ENCODE measurements at regions of chr1 and their contacts with region 1.

Region 1: DNA sequence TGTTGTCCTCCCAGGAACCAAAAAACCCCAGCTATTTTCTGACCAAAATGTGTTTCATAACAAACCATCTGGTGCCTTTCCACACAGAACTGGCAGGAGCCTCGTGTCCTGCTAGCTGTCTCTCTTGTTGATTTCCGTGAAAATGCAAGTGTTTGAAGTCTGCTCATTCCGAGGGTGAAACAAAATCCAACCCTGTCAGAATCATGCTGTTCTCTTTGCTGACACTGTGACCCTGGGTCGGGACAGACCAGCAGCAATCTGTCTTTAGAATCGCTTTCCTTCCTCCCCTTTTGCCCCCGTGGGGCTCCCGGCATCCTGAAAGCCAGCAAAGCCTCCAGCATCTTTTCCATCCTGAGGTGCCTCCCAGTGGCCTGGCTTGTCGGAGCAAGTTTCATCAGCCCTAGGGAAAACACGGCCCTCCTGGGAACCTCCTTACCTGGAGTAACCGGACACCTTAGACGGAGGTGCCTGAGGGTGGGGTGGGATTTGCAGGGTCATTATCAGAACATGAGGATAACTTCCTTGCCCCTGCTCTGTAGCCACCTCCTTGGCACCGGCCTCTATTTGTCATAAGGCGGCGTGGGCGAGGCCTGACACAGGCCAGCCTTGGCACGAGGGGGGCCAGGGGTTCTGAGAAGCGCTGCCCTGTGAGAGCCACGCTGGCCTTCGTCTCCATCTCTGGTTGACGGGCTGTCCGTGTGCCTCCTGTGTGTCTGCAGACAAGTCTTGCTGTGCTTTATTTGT is 24.9 kb downstream of the LDLRAP1 start:
- DNase-seq: no peak
- ATAC-seq: 0 out of 3 replicates have a peak, but pooled peaks have one; percentile 5
- H3K4me3 ChIP-seq: no peak overlapping the region
- H3K27ac ChIP-seq: no peak overlapping the region
- H3K4me1 ChIP-seq: peaks cover 22% of the 10 kb centered on the region
- H3K27me3 ChIP-seq: peaks cover 0 to 3% of the 10 kb centered on the region in 2 experiments; a peak in 1 of 5 replicates
- CTCF ChIP-seq: peak; percentile 33; the same call in 1 of the 2 replicates
- EP300 ChIP-seq: no peak
- POLR2A ChIP-seq: no peak
- RAD21 ChIP-seq: no peak

Region 2: GRCh38 chr1:25392841-25393240 is 175.4 kb before region 1 on chr1:
- CTCF ChIA-PET with region 1: no interaction called
- POLR2A ChIA-PET with region 1: no interaction called
- in situ Hi-C with region 1: no loop called
- intact Hi-C with region 1: no loop called
- DNase-seq: no peak
- ATAC-seq: no peak
- H3K4me3 ChIP-seq: no peak overlapping the region
- H3K27ac ChIP-seq: no peak overlapping the region
- H3K4me1 ChIP-seq: no peaks in the 10 kb centered on the region
- H3K27me3 ChIP-seq: peaks cover 0 to 1% of the 10 kb centered on the region in 2 experiments; a peak in 1 of 5 replicates
- CTCF ChIP-seq: no peak
- EP300 ChIP-seq: no peak
- POLR2A ChIP-seq: no peak
- RAD21 ChIP-seq: no peak

Region 3: DNA sequence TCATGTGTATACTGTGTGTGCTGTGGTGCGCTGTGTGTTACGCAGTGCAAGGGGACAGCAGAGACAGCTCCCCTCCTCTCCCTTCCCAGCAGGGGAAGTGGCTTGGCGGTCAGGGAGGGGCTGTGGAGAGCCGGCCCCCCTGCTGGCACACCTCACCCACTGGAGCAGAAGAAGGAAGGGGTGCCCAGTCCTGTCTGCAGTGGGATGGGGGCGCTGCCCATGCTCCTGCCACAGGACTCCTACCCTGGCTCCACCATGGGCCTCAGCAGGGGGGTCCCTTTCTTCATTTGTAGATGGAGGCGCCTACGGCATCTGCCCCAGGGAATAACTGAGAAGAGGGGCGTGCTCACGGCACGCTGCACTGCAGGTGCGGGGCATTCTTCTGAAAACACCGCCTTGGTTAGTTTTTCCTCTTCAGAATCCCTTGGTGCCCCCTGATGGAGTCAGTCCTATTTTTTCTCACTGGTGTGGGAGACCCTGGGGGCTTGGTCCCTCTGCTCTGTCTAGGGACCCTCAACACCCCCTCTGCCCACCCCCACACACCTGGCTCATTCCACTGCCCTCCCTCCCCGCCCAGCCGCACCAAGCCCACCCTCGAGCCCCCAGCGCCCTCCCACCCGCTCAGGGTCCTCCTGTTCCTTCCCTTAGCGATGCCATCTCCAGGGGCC is 38.6 kb before region 1 on chr1:
- CTCF ChIA-PET with region 1: no interaction called
- POLR2A ChIA-PET with region 1: no interaction called
- in situ Hi-C with region 1: loop called (anchors 5 kb)
- intact Hi-C with region 1: no loop called
- DNase-seq: no peak
- ATAC-seq: no peak; the same call in 2 of the 3 replicates
- H3K4me3 ChIP-seq: peak overlapping the region in 1 of 3 experiments; percentile 23; a peak in 1 of 6 replicates
- H3K27ac ChIP-seq: no peak overlapping the region
- H3K4me1 ChIP-seq: peaks cover 21% of the 10 kb centered on the region
- H3K27me3 ChIP-seq: peaks cover 0 to 7% of the 10 kb centered on the region in 2 experiments; a peak in 3 of 5 replicates
- CTCF ChIP-seq: no peak
- EP300 ChIP-seq: no peak
- POLR2A ChIP-seq: no peak
- RAD21 ChIP-seq: no peak

Region 4: DNA sequence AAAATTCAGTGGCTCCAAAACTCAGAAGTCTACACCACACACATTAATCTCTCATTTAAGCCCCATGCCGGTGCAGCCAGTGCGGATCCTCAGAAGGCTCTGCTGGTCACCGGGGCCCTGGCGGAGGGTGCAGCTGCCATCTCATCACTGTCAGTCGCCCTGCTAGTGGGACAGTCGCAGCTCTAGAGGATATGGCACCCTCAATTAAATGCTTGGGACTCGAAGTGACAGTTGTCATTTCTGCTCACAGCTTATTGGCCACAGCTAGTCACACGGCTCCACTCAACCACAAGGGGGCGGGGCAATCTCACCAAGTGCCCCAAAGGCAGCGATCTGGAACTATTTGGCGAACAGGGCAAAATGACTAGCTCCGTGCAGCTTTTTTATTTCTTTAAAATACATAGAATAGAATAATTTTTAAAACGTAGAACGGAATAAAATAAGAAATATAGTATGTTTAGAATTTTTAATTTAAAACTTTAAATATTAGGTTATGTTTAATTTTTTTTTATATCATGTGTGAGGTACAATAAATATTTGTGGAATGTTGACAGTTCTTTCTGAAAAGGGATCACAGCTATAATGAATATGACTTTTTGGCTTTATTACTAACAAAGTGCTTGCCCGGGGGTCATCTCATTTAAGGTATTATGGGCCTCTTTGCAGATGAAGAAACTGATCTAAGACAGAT is 40.4 kb after region 1 on chr1:
- CTCF ChIA-PET with region 1: no interaction called
- POLR2A ChIA-PET with region 1: no interaction called
- in situ Hi-C with region 1: no loop called
- intact Hi-C with region 1: no loop called
- DNase-seq: peak; percentile 62
- ATAC-seq: peak; percentile 89
- H3K4me3 ChIP-seq: peak overlapping the region in 1 of 3 experiments; percentile 23; a peak in 1 of 6 replicates
- H3K27ac ChIP-seq: no peak overlapping the region
- H3K4me1 ChIP-seq: peaks cover 12% of the 10 kb centered on the region; the same call in 1 of the 2 replicates
- H3K27me3 ChIP-seq: peaks cover 0 to 12% of the 10 kb centered on the region in 2 experiments; a peak in 2 of 5 replicates
- CTCF ChIP-seq: peak; percentile 83
- EP300 ChIP-seq: no peak
- POLR2A ChIP-seq: no peak
- RAD21 ChIP-seq: no peak